Psoas muscle (tissue), 8 donors: ENCODE measurements at regions of chrX and their contacts with region 1.

Region 1: DNA sequence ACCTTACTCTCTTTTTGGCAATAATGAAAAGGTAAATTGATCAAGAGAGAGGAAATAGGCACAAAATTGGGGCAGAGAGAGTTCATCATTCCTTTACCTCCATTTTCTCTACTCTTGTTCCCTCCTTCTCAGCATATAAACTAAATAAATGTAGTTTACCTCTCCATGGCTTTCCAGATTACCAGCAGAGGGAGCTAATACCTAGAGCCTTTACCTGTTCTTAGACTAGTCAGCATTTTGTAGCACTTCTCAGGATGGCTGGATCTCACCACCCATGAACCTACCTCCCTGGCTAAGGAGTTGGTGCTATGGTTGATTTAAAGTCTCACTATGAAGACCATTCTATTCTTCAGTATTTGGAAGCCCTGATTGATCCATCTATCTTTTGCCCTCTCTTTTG is 15.7 kb downstream of the OFD1 start:
- DNase-seq: no peak
- ATAC-seq: peak in 3 of 4 donors; percentile 36 to 58 (median 52)
- H3K4me3 ChIP-seq: no peak overlapping the region
- H3K27ac ChIP-seq: no peak overlapping the region
- H3K4me1 ChIP-seq: no peaks in the 10 kb centered on the region
- H3K27me3 ChIP-seq: no peaks in the 10 kb centered on the region
- CTCF ChIP-seq: peak; percentile 54

Region 2: DNA sequence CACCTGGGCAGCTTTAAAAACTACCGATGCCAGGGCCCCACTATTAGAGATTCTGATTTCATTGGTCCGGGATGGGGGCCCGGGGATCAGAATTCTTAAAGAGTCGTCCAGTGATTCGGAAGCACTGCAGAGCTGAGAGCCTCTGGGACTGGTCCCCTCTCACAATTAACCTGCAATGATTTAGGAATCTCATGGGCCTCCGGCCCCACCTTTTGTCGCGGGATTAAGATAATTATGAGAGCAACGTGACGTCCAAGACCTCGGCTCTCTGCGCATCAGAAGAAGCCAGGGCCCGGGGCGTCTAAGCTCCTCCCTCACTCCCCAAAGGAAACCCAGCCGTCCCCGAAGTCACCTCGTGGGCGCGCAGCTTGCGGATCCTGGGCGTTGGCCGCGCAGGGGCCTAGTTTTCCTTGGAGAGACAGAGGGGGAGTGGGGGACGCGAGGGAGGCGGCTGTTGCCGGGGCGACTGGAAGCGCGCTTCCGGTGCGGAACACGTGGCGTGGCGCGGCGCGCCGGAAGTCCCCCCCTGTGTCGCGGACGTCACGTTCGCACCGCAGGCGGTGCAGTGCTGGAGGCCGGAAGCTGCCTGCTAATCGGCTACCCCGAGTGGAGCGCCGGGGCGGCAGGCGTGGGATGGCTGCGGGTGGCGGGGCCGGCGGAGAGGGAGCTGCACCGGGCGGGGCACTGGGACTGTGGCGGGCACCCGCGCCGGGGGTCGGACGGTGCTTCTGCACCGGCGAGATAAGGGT is 279.4 kb after region 1 on chrX and contains the start of gene GEMIN8:
- intact Hi-C with region 1: loop called (anchors 5 kb)
- DNase-seq: peak; percentile 89 to 95
- ATAC-seq: peak; percentile 98
- H3K4me3 ChIP-seq: peak within 1 kb of the TSS; percentile 72
- H3K27ac ChIP-seq: peak within 1 kb of the TSS; percentile 91
- H3K4me1 ChIP-seq: peaks cover 13% of the 10 kb centered on the region
- H3K27me3 ChIP-seq: no peaks in the 10 kb centered on the region
- CTCF ChIP-seq: no peak
- total RNA-seq, gene GEMIN8: 7.8 to 8.5 (median 8.3) TPM